AG04449 (cell line): ENCODE measurements at regions of chr20 and their contacts with region 1.

Region 1: GRCh38 chr20:2131366-2131765 is 29.7 kb downstream of the STK35 start:
- DNase-seq: no peak
- H3K4me3 ChIP-seq: no peak overlapping the region
- CTCF ChIP-seq: no peak

Region 2: GRCh38 chr20:1830240-1830639 is 301.1 kb before region 1 on chr20:
- CTCF ChIA-PET with region 1: no interaction called
- POLR2A ChIA-PET with region 1: no interaction called
- DNase-seq: peak; percentile 91
- H3K4me3 ChIP-seq: no peak overlapping the region
- CTCF ChIP-seq: no peak

Region 3: DNA sequence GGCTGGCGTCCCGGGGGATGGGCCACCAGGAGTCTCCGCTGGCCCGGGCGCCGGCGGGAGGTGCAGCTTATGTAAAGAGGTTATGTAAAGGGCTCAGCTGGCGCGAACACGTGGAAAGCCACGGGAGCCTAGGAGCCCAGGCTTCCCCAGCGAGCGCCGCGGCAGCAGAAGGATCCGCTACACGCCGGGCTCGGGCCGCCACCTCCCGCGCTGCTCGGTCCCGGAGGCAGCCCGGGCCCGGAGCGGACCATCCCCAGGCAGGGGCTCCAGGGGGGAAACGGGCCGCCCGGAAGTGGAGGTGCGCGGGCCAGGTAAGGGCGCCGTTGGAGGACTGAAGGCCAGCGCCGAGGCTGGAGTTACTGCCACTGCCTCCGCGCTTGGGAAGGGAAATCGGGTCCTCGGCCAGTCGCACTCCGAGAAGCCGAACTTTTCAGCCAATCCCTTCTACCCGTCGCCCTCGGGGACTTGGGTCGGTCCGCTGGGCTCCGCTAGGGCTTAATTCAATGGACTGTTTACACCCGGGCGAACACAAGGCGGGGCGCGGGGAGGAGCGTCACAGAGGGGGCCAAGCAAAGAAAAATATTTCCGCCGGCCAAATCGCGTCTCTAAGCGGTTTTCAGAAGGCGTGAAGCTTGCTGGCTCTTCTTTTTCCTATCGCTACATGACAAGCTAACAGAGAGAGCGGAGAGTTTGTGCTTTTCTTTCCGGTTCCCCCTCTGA is 29.3 kb before region 1 on chr20:
- CTCF ChIA-PET with region 1: no interaction called
- POLR2A ChIA-PET with region 1: interaction called, 10 read pairs
- DNase-seq: peak; percentile 63
- H3K4me3 ChIP-seq: peak overlapping the region; percentile 94
- CTCF ChIP-seq: no peak